Left colon (tissue), 2 donors: ENCODE measurements at regions of chr18 and their contacts with region 1.

Region 1: DNA sequence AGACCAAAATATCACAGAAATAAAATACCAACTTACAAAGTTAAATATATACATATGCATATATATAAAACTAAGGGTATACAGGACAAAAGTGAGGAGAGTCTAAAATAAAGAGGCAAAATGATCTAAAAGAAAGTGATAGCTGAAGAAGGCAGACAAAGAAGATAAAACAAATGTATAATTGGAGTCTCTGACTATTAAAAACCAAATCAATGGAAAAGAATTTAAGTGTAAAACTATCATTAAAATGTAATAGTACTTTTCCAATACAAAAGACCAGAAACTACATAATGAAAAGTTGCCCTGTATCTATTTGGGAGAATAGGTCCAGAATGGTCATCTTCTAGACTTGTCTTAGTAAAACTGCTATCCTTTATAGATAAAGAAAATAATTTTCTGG is 267.4 kb upstream of the KLHL14 start:
- DNase-seq: no peak
- ATAC-seq: no peak

Region 2: GRCh38 chr18:32974421-32975162 is 65.6 kb before region 1 on chr18:
- intact Hi-C with region 1: no loop called
- DNase-seq: no peak
- ATAC-seq: no peak

Region 3: GRCh38 chr18:33101316-33101715 is 61.1 kb after region 1 on chr18:
- intact Hi-C with region 1: loop called in 1 of 2 experiments (anchors 10 kb)
- DNase-seq: no peak
- ATAC-seq: no peak

Region 4: GRCh38 chr18:33239298-33239697 is 199.1 kb after region 1 on chr18:
- intact Hi-C with region 1: no loop called
- DNase-seq: no peak
- ATAC-seq: no peak